Posterior cingulate gyrus (tissue), 11 donors: ENCODE measurements at regions of chr1 and their contacts with region 1.

Region 1: GRCh38 chr1:117059678-117060440 is at the start of gene TTF2:
- DNase-seq: peak; percentile 79 to 98 (median 88)

Region 2: GRCh38 chr1:116570358-116571200 is 489.3 kb before region 1 on chr1 and contains the start of gene CD58:
- intact Hi-C with region 1: loop called (anchors 5 kb)
- DNase-seq: peak; percentile 52 to 95 (median 72)

Region 3: GRCh38 chr1:116737020-116737854 is 322.6 kb before region 1 on chr1:
- intact Hi-C with region 1: loop called (anchors 1 kb)
- DNase-seq: peak; percentile 29 to 94 (median 62)